T-cell (primary cell): ENCODE measurements at regions of chr6 and their contacts with region 1.

Region 1: DNA sequence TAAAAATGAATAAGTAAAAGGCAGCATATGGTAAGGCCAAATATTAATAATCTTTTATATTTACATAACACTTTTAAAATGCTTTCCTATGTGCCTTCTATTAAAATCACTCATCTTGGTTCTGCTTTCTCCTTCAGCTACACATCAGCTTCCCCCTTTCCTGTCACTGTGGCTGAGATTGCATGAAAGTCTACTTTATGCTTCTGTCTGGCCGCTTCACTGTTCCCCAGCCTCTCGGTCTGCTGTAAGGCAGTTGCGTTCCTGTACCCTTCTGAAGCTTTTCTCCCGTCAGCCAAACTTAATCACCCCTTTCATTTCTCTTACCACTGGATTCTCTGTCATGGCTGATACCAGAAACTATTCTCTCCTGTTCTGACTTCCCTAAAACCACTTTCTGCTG is 34.6 kb downstream of the SOX4 start:
- DNase-seq: no peak
- ATAC-seq: no peak
- H3K4me3 ChIP-seq: no peak overlapping the region
- H3K4me3 Mint-ChIP-seq: no peak overlapping the region
- H3K27ac ChIP-seq: no peak overlapping the region
- H3K27ac Mint-ChIP-seq: no peak overlapping the region
- H3K4me1 ChIP-seq: no peaks in the 10 kb centered on the region
- H3K4me1 Mint-ChIP-seq: no peaks in the 10 kb centered on the region
- H3K27me3 ChIP-seq: no peaks in the 10 kb centered on the region
- H3K27me3 Mint-ChIP-seq: no peaks in the 10 kb centered on the region

Region 2: DNA sequence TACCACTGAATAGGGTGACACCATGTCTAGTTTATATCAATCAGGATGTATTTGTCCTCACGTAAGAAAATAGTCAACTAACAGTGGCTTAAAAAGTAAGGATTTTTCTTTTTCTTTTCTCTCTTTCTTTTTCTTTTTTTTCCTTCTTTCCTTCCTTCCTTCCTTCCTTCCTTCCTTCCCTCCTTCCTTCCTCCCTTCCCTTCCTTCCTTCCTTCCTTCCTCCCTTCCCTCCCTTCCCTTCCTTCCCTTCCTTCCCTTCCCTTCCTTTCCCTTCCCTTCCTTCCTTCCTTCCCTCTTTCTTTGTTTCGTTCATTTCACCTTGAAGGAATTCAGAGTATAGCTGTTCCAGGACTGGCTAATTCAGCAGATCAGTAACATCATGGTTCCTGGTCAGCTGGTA is 48.6 kb after region 1 on chr6:
- CTCF ChIA-PET with region 1: no interaction called
- POLR2A ChIA-PET with region 1: interaction called in 1 of 2 experiments, 13 read pairs
- DNase-seq: no peak
- ATAC-seq: no peak
- H3K4me3 ChIP-seq: no peak overlapping the region
- H3K4me3 Mint-ChIP-seq: no peak overlapping the region
- H3K27ac ChIP-seq: no peak overlapping the region
- H3K27ac Mint-ChIP-seq: no peak overlapping the region
- H3K4me1 ChIP-seq: no peaks in the 10 kb centered on the region
- H3K4me1 Mint-ChIP-seq: no peaks in the 10 kb centered on the region
- H3K27me3 ChIP-seq: no peaks in the 10 kb centered on the region
- H3K27me3 Mint-ChIP-seq: peaks cover 9 to 15% of the 10 kb centered on the region in 2 donors

Region 3: DNA sequence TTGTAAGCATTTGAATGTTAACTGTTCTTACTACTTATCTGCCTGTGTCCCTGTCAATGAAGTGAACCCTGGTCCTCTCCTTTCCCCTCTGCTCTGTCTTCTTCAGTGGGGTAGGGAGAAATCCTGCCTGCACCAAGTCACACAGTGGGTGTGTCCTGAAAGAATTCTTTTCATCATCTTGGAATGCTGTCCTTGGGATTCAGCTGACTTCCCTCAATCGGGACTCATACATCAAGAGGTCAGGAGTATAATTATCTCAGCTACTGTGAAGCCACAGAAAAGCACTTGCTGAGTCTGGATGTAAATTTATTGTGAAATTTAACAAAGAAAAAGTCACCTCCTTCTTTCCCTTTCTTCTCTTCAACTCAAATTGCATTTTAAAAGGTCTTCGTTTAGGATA is 293.9 kb after region 1 on chr6:
- CTCF ChIA-PET with region 1: no interaction called
- POLR2A ChIA-PET with region 1: no interaction called
- DNase-seq: no peak
- ATAC-seq: no peak
- H3K4me3 ChIP-seq: no peak overlapping the region
- H3K4me3 Mint-ChIP-seq: no peak overlapping the region
- H3K27ac ChIP-seq: no peak overlapping the region
- H3K27ac Mint-ChIP-seq: no peak overlapping the region
- H3K4me1 ChIP-seq: peaks cover 4 to 35% of the 10 kb centered on the region in 2 experiments
- H3K4me1 Mint-ChIP-seq: peaks cover 0 to 8% (median 5%) of the 10 kb centered on the region in 3 donors
- H3K27me3 ChIP-seq: no peaks in the 10 kb centered on the region
- H3K27me3 Mint-ChIP-seq: no peaks in the 10 kb centered on the region